ENCODE measurements at regions of chr3 and their contacts with region 1.

Region 1: GRCh38 chr3:56988458-56989168 is 71.9 kb upstream of the SPATA12 start:
- DNase-seq: peak; percentile 71 to 80
- H3K4me3 ChIP-seq: no peak overlapping the region
- H3K4me3 Mint-ChIP-seq: no peak overlapping the region
- H3K27ac Mint-ChIP-seq: no peak overlapping the region
- H3K4me1 ChIP-seq: peaks cover 38% of the 10 kb centered on the region
- H3K4me1 Mint-ChIP-seq: peaks cover 25% of the 10 kb centered on the region
- H3K27me3 ChIP-seq: no peaks in the 10 kb centered on the region
- H3K27me3 Mint-ChIP-seq: no peaks in the 10 kb centered on the region
- CTCF ChIP-seq: peak; percentile 53 to 73

Region 2: GRCh38 chr3:56702490-56703315 is 285.9 kb before region 1 on chr3:
- CTCF ChIA-PET with region 1: interaction called, 36 read pairs
- POLR2A ChIA-PET with region 1: interaction called, 3 read pairs
- intact Hi-C with region 1: loop called (anchors 1 kb)
- DNase-seq: peak in 1 of 2 experiments; percentile 56
- H3K4me3 ChIP-seq: no peak overlapping the region
- H3K4me3 Mint-ChIP-seq: no peak overlapping the region
- H3K27ac Mint-ChIP-seq: no peak overlapping the region
- H3K4me1 ChIP-seq: peaks cover 4% of the 10 kb centered on the region; the same call in 1 of the 2 replicates
- H3K4me1 Mint-ChIP-seq: peaks cover 12% of the 10 kb centered on the region
- H3K27me3 ChIP-seq: no peaks in the 10 kb centered on the region
- H3K27me3 Mint-ChIP-seq: no peaks in the 10 kb centered on the region
- CTCF ChIP-seq: peak; percentile 68 to 76

Region 3: DNA sequence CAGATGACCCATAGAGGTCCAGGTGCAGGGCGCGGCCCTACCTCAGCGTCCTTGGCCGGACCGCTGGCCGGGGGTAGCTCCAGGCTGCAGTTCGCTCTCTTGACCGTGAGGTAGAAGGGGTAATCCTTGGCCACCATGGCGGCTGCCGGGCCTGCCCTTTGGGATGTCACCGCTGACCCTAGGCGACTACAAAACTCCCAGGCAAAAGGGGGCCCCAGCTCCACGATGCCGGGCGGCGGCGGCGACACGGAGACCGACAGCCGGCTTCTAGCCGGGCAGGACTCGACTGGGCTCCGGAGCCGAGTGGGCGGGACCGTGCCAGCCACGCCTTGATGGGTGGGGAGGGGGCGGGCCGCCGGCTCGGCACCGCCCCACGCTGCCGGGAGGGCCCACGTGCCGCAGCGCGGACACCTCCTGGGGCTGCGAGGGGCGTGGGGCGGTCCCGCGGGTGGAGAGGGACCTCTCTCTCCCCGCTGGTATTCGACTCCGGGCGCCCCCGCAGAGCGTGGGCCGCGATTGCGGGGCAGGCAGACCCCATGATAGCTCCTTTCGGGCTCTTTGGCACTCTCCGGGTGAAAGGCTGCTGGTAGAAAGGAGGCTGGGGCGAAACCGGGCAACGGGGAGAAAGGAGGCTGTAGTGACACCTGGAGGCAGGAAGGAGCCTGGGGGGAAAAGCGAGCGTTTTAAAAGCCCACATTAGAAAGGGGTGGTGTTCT is 186.8 kb before region 1 on chr3 and contains the start of gene ARHGEF3:
- CTCF ChIA-PET with region 1: interaction called, 42 read pairs
- POLR2A ChIA-PET with region 1: no interaction called
- intact Hi-C with region 1: loop called (anchors 1 kb)
- DNase-seq: peak; percentile 82 to 84
- H3K4me3 ChIP-seq: peak within 1 kb of the TSS; percentile 79
- H3K4me3 Mint-ChIP-seq: peak within 1 kb of the TSS; percentile 79
- H3K27ac Mint-ChIP-seq: peak within 1 kb of the TSS; percentile 45
- H3K4me1 ChIP-seq: peaks cover 14% of the 10 kb centered on the region
- H3K4me1 Mint-ChIP-seq: no peaks in the 10 kb centered on the region
- H3K27me3 ChIP-seq: no peaks in the 10 kb centered on the region
- H3K27me3 Mint-ChIP-seq: no peaks in the 10 kb centered on the region
- CTCF ChIP-seq: peak; percentile 32 to 83
- total RNA-seq, gene ARHGEF3: 10.2 and 14.8 TPM in 2 replicates

Region 4: GRCh38 chr3:56823421-56824343 is 164.9 kb before region 1 on chr3:
- CTCF ChIA-PET with region 1: interaction called, 7 read pairs
- POLR2A ChIA-PET with region 1: no interaction called
- intact Hi-C with region 1: loop called (anchors 1 kb)
- DNase-seq: peak in 1 of 2 experiments; percentile 35
- H3K4me3 ChIP-seq: no peak overlapping the region
- H3K4me3 Mint-ChIP-seq: peak overlapping the region; percentile 17
- H3K27ac Mint-ChIP-seq: peak overlapping the region; percentile 25
- H3K4me1 ChIP-seq: peaks cover 44% of the 10 kb centered on the region
- H3K4me1 Mint-ChIP-seq: peaks cover 31% of the 10 kb centered on the region
- H3K27me3 ChIP-seq: no peaks in the 10 kb centered on the region
- H3K27me3 Mint-ChIP-seq: no peaks in the 10 kb centered on the region
- CTCF ChIP-seq: no peak

Region 5: GRCh38 chr3:56855856-56856512 is 132.6 kb before region 1 on chr3:
- CTCF ChIA-PET with region 1: interaction called, 3 read pairs
- POLR2A ChIA-PET with region 1: no interaction called
- intact Hi-C with region 1: loop called (anchors 1 kb)
- DNase-seq: peak; percentile 45 to 51
- H3K4me3 ChIP-seq: no peak overlapping the region
- H3K4me3 Mint-ChIP-seq: no peak overlapping the region
- H3K27ac Mint-ChIP-seq: no peak overlapping the region
- H3K4me1 ChIP-seq: no peaks in the 10 kb centered on the region
- H3K4me1 Mint-ChIP-seq: peaks cover 15% of the 10 kb centered on the region
- H3K27me3 ChIP-seq: no peaks in the 10 kb centered on the region
- H3K27me3 Mint-ChIP-seq: no peaks in the 10 kb centered on the region
- CTCF ChIP-seq: peak; percentile 31 to 51

Region 6: DNA sequence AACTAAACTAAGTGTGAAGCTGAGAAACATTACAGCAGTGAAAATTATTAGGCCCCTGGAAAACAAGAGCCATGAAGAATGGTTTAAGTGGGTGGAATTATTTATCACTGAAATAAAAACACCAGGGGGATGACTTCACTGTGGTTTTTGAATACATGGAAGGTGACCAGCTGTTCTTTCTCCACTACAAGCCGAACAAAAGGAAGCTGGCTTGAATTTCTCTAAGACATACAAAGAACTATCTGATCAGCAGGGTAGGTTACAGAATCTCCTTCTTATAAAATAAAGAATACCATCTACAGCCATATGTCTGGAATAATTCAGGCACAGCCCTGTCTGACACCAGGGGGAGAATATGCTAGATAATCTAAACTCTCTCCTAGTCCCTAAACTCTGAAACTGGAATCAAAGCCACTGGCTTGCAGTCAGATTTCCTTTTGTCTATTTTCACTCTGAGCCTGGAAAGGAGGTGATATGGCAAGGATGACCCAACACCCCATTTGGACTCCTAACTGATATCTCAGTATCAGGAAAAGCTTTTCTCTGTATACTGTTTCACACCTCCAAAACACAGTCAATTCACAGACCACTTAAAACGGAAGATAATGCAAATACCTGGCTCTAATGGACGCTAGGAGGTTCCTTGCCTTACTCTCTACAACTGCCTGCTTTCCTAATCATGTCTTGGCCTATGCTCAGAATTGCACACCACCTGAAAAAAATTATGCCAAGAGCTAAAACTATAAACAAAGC is 103.1 kb after region 1 on chr3:
- CTCF ChIA-PET with region 1: interaction called, 3 read pairs
- POLR2A ChIA-PET with region 1: no interaction called
- intact Hi-C with region 1: loop called (anchors 2 kb)
- DNase-seq: no peak
- H3K4me3 ChIP-seq: no peak overlapping the region
- H3K4me3 Mint-ChIP-seq: no peak overlapping the region
- H3K27ac Mint-ChIP-seq: no peak overlapping the region
- H3K4me1 ChIP-seq: peaks cover 10% of the 10 kb centered on the region; the same call in 1 of the 2 replicates
- H3K4me1 Mint-ChIP-seq: peaks cover 11% of the 10 kb centered on the region
- H3K27me3 ChIP-seq: no peaks in the 10 kb centered on the region
- H3K27me3 Mint-ChIP-seq: no peaks in the 10 kb centered on the region
- CTCF ChIP-seq: no peak